ENCODE measurements at regions of chr11 and their contacts with region 1.

Region 1: GRCh38 chr11:59135648-59136461 is 6.8 kb upstream of the FAM111A start:
- DNase-seq: peak; percentile 93
- ATAC-seq: peak; percentile 100
- H3K4me3 Mint-ChIP-seq: peak overlapping the region; percentile 59
- H3K27ac Mint-ChIP-seq: no peak overlapping the region
- H3K4me1 Mint-ChIP-seq: peaks cover 2% of the 10 kb centered on the region; the same call in 1 of the 2 replicates
- H3K27me3 Mint-ChIP-seq: peaks cover 6% of the 10 kb centered on the region; the same call in 1 of the 2 replicates
- CTCF ChIP-seq: peak; percentile 92

Region 2: GRCh38 chr11:58629857-58630256 is 506.0 kb before region 1 on chr11:
- CTCF ChIA-PET with region 1: interaction called, 13 read pairs
- POLR2A ChIA-PET with region 1: no interaction called
- DNase-seq: no peak
- ATAC-seq: peak; percentile 85
- H3K4me3 Mint-ChIP-seq: no peak overlapping the region
- H3K27ac Mint-ChIP-seq: no peak overlapping the region
- H3K4me1 Mint-ChIP-seq: peaks cover 2% of the 10 kb centered on the region
- H3K27me3 Mint-ChIP-seq: no peaks in the 10 kb centered on the region
- CTCF ChIP-seq: no peak; the same call in 1 of the 2 replicates

Region 3: GRCh38 chr11:58905721-58906477 is 230.0 kb before region 1 on chr11:
- CTCF ChIA-PET with region 1: interaction called, 28 read pairs
- POLR2A ChIA-PET with region 1: no interaction called
- DNase-seq: peak; percentile 85
- ATAC-seq: peak; percentile 80
- H3K4me3 Mint-ChIP-seq: peak overlapping the region; percentile 65
- H3K27ac Mint-ChIP-seq: no peak overlapping the region
- H3K4me1 Mint-ChIP-seq: peaks cover 31% of the 10 kb centered on the region
- H3K27me3 Mint-ChIP-seq: peaks cover 79% of the 10 kb centered on the region
- CTCF ChIP-seq: no peak; the same call in 1 of the 2 replicates

Region 4: GRCh38 chr11:58963528-58964104 is 172.2 kb before region 1 on chr11:
- CTCF ChIA-PET with region 1: interaction called, 21 read pairs
- POLR2A ChIA-PET with region 1: interaction called, 3 read pairs
- DNase-seq: peak; percentile 74
- ATAC-seq: peak; percentile 94
- H3K4me3 Mint-ChIP-seq: peak overlapping the region; percentile 64
- H3K27ac Mint-ChIP-seq: peak overlapping the region; percentile 78; the same call in 1 of the 2 replicates
- H3K4me1 Mint-ChIP-seq: peaks cover 26% of the 10 kb centered on the region
- H3K27me3 Mint-ChIP-seq: peaks cover 65% of the 10 kb centered on the region
- CTCF ChIP-seq: no peak

Region 5: GRCh38 chr11:59106363-59107336 is 29.2 kb before region 1 on chr11 and contains the start of gene FAM111B:
- CTCF ChIA-PET with region 1: interaction called, 47 read pairs
- POLR2A ChIA-PET with region 1: interaction called, 4 read pairs
- DNase-seq: peak; percentile 82
- ATAC-seq: peak; percentile 82
- H3K4me3 Mint-ChIP-seq: peak within 1 kb of the TSS; percentile 85
- H3K27ac Mint-ChIP-seq: no peak within 1 kb of the TSS; the same call in 1 of the 2 replicates
- H3K4me1 Mint-ChIP-seq: peaks cover 35% of the 10 kb centered on the region
- H3K27me3 Mint-ChIP-seq: peaks cover 51% of the 10 kb centered on the region
- CTCF ChIP-seq: no peak
- total RNA-seq, gene FAM111B: 16.3 to 25.5 TPM (median 17.7 TPM) in 3 replicates

Region 6: GRCh38 chr11:59283825-59284772 is 148.2 kb after region 1 on chr11:
- CTCF ChIA-PET with region 1: no interaction called
- POLR2A ChIA-PET with region 1: no interaction called
- DNase-seq: peak; percentile 30
- ATAC-seq: peak; percentile 73
- H3K4me3 Mint-ChIP-seq: no peak overlapping the region
- H3K27ac Mint-ChIP-seq: no peak overlapping the region
- H3K4me1 Mint-ChIP-seq: peaks cover 7% of the 10 kb centered on the region; the same call in 1 of the 2 replicates
- H3K27me3 Mint-ChIP-seq: no peaks in the 10 kb centered on the region
- CTCF ChIP-seq: peak; percentile 46; the same call in 1 of the 2 replicates